ENCODE measurements at regions of chr5 and their contacts with region 1.

Region 1: GRCh38 chr5:129767906-129768380 is 20.0 kb downstream of the MINAR2 start:
- DNase-seq: peak; percentile 97
- H3K4me3 Mint-ChIP-seq: no peak overlapping the region
- H3K27ac Mint-ChIP-seq: no peak overlapping the region
- H3K4me1 Mint-ChIP-seq: peaks cover 5% of the 10 kb centered on the region
- H3K27me3 Mint-ChIP-seq: no peaks in the 10 kb centered on the region
- CTCF ChIP-seq: peak; percentile 99

Region 2: GRCh38 chr5:128920345-128921215 is 847.4 kb before region 1 on chr5:
- CTCF ChIA-PET with region 1: no interaction called
- POLR2A ChIA-PET with region 1: no interaction called
- intact Hi-C with region 1: loop called (anchors 5 kb)
- DNase-seq: peak; percentile 79
- H3K4me3 Mint-ChIP-seq: no peak overlapping the region
- H3K27ac Mint-ChIP-seq: no peak overlapping the region
- H3K4me1 Mint-ChIP-seq: peaks cover 8% of the 10 kb centered on the region
- H3K27me3 Mint-ChIP-seq: peaks cover 7% of the 10 kb centered on the region
- CTCF ChIP-seq: no peak

Region 3: DNA sequence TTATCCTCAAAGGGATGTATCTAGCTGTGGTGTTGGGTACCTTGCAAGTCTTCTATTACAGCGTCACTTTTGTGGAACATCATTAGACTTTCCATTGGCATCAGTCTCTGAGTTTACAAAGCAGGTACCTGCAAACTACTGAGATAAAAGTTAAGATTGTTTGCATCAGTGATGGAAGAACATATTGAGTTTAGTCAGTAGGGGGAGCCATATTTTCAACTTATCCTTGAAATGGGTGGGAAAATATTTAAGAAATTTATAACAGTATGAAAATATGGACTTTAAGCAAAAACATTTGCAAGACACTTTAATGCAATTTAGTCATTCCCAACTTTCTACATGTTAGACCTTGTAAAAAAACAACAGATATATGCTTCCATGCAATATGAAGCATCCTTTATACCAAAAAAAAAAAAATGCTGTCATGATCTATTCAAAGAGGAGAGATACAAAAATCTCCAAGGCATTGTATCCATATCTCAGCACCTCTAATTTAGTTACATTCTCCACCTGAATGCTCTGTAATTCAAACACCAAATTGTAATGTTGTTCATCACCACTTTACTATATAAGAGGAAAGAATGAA is 406.4 kb before region 1 on chr5:
- CTCF ChIA-PET with region 1: interaction called, 47 read pairs
- POLR2A ChIA-PET with region 1: no interaction called
- intact Hi-C with region 1: loop called (anchors 1 kb)
- DNase-seq: peak; percentile 47
- H3K4me3 Mint-ChIP-seq: no peak overlapping the region
- H3K27ac Mint-ChIP-seq: no peak overlapping the region
- H3K4me1 Mint-ChIP-seq: no peaks in the 10 kb centered on the region
- H3K27me3 Mint-ChIP-seq: peaks cover 19% of the 10 kb centered on the region
- CTCF ChIP-seq: peak; percentile 62

Region 4: DNA sequence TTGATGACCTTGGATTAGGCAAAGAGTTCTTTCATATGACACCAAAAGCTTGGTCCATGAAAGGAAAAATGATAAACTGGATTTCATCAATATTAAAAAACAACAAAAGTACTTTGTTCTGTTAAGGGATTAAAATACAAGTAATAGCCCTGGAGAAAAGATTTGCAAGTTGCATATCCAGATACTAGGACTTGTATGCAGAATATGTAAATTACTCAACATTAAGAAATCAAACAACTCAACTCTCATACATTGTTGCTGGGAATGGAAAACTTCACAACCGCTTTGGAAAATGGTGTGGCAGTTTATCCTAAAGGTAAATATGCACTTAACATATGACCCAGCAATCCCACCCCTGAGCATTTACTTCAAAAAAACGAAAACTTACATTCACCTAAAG is 195.9 kb before region 1 on chr5:
- CTCF ChIA-PET with region 1: no interaction called
- POLR2A ChIA-PET with region 1: no interaction called
- intact Hi-C with region 1: no loop called
- DNase-seq: no peak
- H3K4me3 Mint-ChIP-seq: no peak overlapping the region
- H3K27ac Mint-ChIP-seq: no peak overlapping the region
- H3K4me1 Mint-ChIP-seq: no peaks in the 10 kb centered on the region
- H3K27me3 Mint-ChIP-seq: peaks cover 97% of the 10 kb centered on the region
- CTCF ChIP-seq: no peak

Region 5: DNA sequence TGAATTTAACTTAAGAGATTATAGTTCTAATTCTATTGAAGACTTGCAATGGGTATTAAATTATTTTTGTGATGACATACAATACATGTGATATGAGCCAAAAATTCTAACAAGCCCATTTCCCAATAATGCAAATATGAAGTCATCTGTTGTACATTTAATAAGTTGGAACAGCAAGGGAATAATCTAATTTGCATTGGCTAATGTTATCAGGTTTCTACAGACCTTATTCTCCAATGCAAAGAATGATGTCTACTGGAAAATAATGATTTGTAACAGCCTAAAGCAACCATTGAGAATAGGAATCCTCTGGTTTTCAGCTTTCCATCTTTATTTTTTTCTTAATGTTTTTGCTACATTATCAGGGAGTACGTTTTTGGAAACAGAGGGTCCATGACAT is 109.1 kb before region 1 on chr5:
- CTCF ChIA-PET with region 1: interaction called, 19 read pairs
- POLR2A ChIA-PET with region 1: no interaction called
- intact Hi-C with region 1: no loop called
- DNase-seq: no peak
- H3K4me3 Mint-ChIP-seq: no peak overlapping the region
- H3K27ac Mint-ChIP-seq: no peak overlapping the region
- H3K4me1 Mint-ChIP-seq: no peaks in the 10 kb centered on the region
- H3K27me3 Mint-ChIP-seq: no peaks in the 10 kb centered on the region
- CTCF ChIP-seq: no peak

Region 6: GRCh38 chr5:129718471-129719090 is 49.4 kb before region 1 on chr5:
- CTCF ChIA-PET with region 1: no interaction called
- POLR2A ChIA-PET with region 1: no interaction called
- intact Hi-C with region 1: no loop called
- DNase-seq: no peak
- H3K4me3 Mint-ChIP-seq: no peak overlapping the region
- H3K27ac Mint-ChIP-seq: no peak overlapping the region
- H3K4me1 Mint-ChIP-seq: no peaks in the 10 kb centered on the region
- H3K27me3 Mint-ChIP-seq: no peaks in the 10 kb centered on the region
- CTCF ChIP-seq: no peak

Region 7: GRCh38 chr5:129830288-129830687 is 62.3 kb after region 1 on chr5:
- CTCF ChIA-PET with region 1: interaction called, 17 read pairs
- POLR2A ChIA-PET with region 1: interaction called, 3 read pairs
- intact Hi-C with region 1: no loop called
- DNase-seq: no peak
- H3K4me3 Mint-ChIP-seq: no peak overlapping the region
- H3K27ac Mint-ChIP-seq: no peak overlapping the region
- H3K4me1 Mint-ChIP-seq: no peaks in the 10 kb centered on the region
- H3K27me3 Mint-ChIP-seq: peaks cover 29% of the 10 kb centered on the region
- CTCF ChIP-seq: no peak

Region 8: GRCh38 chr5:129951039-129951438 is 183.1 kb after region 1 on chr5:
- CTCF ChIA-PET with region 1: no interaction called
- POLR2A ChIA-PET with region 1: no interaction called
- intact Hi-C with region 1: no loop called
- DNase-seq: no peak
- H3K4me3 Mint-ChIP-seq: no peak overlapping the region
- H3K27ac Mint-ChIP-seq: peak overlapping the region; percentile 76
- H3K4me1 Mint-ChIP-seq: peaks cover 7% of the 10 kb centered on the region
- H3K27me3 Mint-ChIP-seq: no peaks in the 10 kb centered on the region
- CTCF ChIP-seq: no peak

Region 9: GRCh38 chr5:130090569-130091270 is 322.8 kb after region 1 on chr5:
- CTCF ChIA-PET with region 1: no interaction called
- POLR2A ChIA-PET with region 1: no interaction called
- intact Hi-C with region 1: no loop called
- DNase-seq: no peak
- H3K4me3 Mint-ChIP-seq: no peak overlapping the region
- H3K27ac Mint-ChIP-seq: no peak overlapping the region
- H3K4me1 Mint-ChIP-seq: no peaks in the 10 kb centered on the region
- H3K27me3 Mint-ChIP-seq: no peaks in the 10 kb centered on the region
- CTCF ChIP-seq: no peak

Region 10: GRCh38 chr5:130720355-130720754 is 952.4 kb after region 1 on chr5:
- CTCF ChIA-PET with region 1: no interaction called
- POLR2A ChIA-PET with region 1: no interaction called
- intact Hi-C with region 1: loop called (anchors 1 kb)
- DNase-seq: peak; percentile 88
- H3K4me3 Mint-ChIP-seq: no peak overlapping the region
- H3K27ac Mint-ChIP-seq: no peak overlapping the region
- H3K4me1 Mint-ChIP-seq: no peaks in the 10 kb centered on the region
- H3K27me3 Mint-ChIP-seq: no peaks in the 10 kb centered on the region
- CTCF ChIP-seq: peak; percentile 80